ENCODE measurements at regions of chr1 and their contacts with region 1.

Region 1: GRCh38 chr1:112501810-112502641 is 6.7 kb upstream of the WNT2B start:
- DNase-seq: peak; percentile 71
- H3K4me3 ChIP-seq: peak overlapping the region; percentile 9 to 46 (median 38)
- H3K27ac ChIP-seq: no peak overlapping the region
- H3K4me1 ChIP-seq: peaks cover 6% of the 10 kb centered on the region
- H3K27me3 ChIP-seq: no peaks in the 10 kb centered on the region
- CTCF ChIP-seq: peak; percentile 69 to 90
- POLR2A ChIP-seq: no peak

Region 2: DNA sequence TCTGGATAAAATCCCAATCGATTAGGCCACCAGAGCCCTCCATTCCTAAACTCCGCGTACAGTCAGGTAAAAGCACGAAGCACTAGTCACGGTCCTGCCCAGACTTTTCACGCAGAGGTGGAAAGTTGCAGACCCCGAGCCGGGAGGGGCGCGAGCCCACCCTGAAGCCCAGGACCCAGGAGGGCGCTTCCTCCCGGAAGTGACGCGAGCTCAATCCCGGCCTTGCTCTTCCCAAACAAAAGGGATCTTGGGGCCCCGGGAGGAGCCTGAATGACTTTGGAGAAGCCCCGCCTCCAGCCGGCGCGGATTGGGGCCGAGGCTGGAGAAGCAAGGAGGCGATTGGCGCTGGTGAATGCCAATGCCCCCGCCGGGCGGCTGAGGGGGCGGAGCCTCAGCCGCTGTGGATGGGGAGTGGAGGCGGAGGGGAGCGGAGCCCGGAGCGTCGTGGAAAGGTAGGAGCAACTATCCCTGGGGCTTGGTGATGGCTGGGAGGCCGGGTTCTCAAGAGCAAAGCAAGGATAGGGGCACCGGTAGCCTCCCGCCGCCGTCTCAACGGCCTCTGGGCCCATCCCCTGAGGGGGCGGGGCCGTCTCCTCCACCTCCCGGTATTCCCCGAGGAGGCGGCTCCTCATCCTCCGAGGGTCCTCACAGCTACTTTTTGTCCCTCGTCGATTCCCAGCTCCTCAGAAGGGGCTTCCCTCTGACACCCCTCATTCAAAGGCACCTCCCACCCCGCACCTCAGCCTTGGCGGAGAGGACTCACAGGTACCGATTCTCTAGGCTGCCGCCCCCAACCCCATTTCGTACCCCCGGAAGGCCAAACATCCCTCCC is 106.0 kb before region 1 on chr1 and contains the start of gene CTTNBP2NL:
- CTCF ChIA-PET with region 1: interaction called, 34 read pairs
- POLR2A ChIA-PET with region 1: interaction called, 3 read pairs
- dilution Hi-C with region 1: no loop called
- intact Hi-C with region 1: loop called (anchors 1 kb)
- DNase-seq: peak; percentile 95
- H3K4me3 ChIP-seq: peak within 1 kb of the TSS; percentile 86 to 94 (median 91)
- H3K27ac ChIP-seq: peak within 1 kb of the TSS; percentile 97
- H3K4me1 ChIP-seq: peaks cover 64% of the 10 kb centered on the region
- H3K27me3 ChIP-seq: no peaks in the 10 kb centered on the region
- CTCF ChIP-seq: no peak
- POLR2A ChIP-seq: peak; percentile 91
- total RNA-seq, gene CTTNBP2NL: 94.4 and 96.4 TPM in 2 replicates

Region 3: DNA sequence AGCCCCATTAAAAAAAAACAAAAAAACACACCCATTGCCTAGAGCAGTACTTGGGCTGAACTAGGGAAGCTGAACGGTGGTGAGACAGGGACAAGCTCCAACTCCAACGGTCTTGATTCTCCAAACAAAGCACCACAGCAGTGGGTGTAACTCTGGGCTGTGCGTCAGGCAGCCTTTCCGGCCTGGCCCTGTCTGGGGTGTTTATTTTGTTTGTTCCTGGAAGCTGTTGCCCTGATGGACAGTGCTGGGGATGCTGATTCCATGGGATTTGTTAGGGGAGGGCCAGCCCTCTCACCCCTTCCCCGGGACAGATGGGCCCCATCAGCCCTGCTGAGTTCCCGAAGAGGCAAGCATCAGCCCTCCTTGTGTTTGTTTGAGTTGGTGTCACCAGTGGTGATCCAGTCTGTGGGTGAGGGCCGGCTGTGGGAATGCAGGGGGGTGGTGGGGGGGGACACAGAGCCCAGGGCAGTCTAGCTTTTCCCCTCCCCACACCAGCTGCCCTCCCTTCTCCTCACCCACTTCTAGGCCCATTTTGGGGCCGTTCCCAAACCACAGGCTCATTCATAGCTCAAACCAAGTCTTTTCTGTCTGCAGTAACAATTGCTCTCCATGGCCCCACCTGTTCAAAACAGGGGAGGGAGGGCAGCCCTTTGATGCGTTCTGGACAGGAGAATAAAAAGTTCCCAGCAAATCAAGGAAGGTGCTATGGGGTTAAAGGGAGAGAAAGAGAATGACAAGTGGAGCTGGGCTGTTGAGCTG is 11.3 kb after region 1 on chr1:
- CTCF ChIA-PET with region 1: interaction called, 35 read pairs
- POLR2A ChIA-PET with region 1: no interaction called
- dilution Hi-C with region 1: no loop called
- intact Hi-C with region 1: no loop called
- DNase-seq: no peak
- H3K4me3 ChIP-seq: no peak overlapping the region
- H3K27ac ChIP-seq: no peak overlapping the region
- H3K4me1 ChIP-seq: peaks cover 3% of the 10 kb centered on the region
- H3K27me3 ChIP-seq: peaks cover 8 to 9% of the 10 kb centered on the region in 2 experiments
- CTCF ChIP-seq: no peak
- POLR2A ChIP-seq: no peak

Region 4: GRCh38 chr1:112544011-112544688 is 42.1 kb after region 1 on chr1:
- CTCF ChIA-PET with region 1: interaction called, 19 read pairs
- POLR2A ChIA-PET with region 1: no interaction called
- dilution Hi-C with region 1: no loop called
- intact Hi-C with region 1: no loop called
- DNase-seq: peak; percentile 92
- H3K4me3 ChIP-seq: peak overlapping the region in 1 of 3 experiments; percentile 27
- H3K27ac ChIP-seq: peak overlapping the region; percentile 99
- H3K4me1 ChIP-seq: peaks cover 27% of the 10 kb centered on the region
- H3K27me3 ChIP-seq: no peaks in the 10 kb centered on the region
- CTCF ChIP-seq: no peak
- POLR2A ChIP-seq: peak; percentile 32

Region 5: DNA sequence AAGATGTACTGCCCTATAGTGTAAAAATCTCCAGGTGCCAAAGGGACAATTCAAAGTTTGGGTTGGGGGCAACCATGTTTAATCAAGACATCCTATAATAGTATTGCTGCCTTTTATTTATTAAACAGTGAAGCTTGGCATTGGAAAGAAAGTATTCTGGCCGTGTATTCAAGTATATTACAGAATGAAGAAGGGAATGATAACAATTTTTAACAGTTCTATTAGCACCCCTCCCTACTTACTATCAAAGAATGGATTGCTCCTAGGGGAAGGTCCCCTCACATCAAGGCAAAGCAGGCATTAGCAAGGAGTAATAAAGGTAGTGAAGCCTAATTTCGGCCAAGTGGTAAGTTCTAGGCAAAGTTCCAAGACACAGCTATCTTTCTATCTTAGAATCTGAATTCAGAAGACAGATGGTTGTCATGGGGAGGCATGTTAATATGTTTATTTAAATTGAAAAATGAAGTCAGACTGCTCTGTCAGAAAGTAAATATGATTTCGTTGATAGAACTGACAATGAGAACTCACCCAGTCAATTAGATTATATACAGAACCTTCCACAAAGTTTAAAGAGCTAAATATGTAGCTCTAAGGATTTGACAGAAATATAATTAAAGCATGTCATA is 92.3 kb after region 1 on chr1:
- CTCF ChIA-PET with region 1: interaction called, 38 read pairs
- POLR2A ChIA-PET with region 1: no interaction called
- dilution Hi-C with region 1: no loop called
- intact Hi-C with region 1: loop called (anchors 5 kb)
- DNase-seq: no peak
- H3K4me3 ChIP-seq: no peak overlapping the region
- H3K27ac ChIP-seq: no peak overlapping the region
- H3K4me1 ChIP-seq: peaks cover 20% of the 10 kb centered on the region
- H3K27me3 ChIP-seq: no peaks in the 10 kb centered on the region
- CTCF ChIP-seq: no peak
- POLR2A ChIP-seq: no peak

Region 6: GRCh38 chr1:112619520-112620376 is 117.7 kb after region 1 on chr1 and contains the start of gene CAPZA1:
- CTCF ChIA-PET with region 1: interaction called, 110 read pairs
- POLR2A ChIA-PET with region 1: interaction called, 16 read pairs
- dilution Hi-C with region 1: no loop called
- intact Hi-C with region 1: loop called (anchors 1 kb)
- DNase-seq: peak; percentile 94
- H3K4me3 ChIP-seq: peak within 1 kb of the TSS; percentile 94 to 98 (median 98)
- H3K27ac ChIP-seq: peak within 1 kb of the TSS; percentile 91
- H3K4me1 ChIP-seq: peaks cover 32% of the 10 kb centered on the region
- H3K27me3 ChIP-seq: no peaks in the 10 kb centered on the region
- CTCF ChIP-seq: no peak
- POLR2A ChIP-seq: peak; percentile 98
- total RNA-seq, gene CAPZA1: 177 and 183 TPM in 2 replicates

Region 7: DNA sequence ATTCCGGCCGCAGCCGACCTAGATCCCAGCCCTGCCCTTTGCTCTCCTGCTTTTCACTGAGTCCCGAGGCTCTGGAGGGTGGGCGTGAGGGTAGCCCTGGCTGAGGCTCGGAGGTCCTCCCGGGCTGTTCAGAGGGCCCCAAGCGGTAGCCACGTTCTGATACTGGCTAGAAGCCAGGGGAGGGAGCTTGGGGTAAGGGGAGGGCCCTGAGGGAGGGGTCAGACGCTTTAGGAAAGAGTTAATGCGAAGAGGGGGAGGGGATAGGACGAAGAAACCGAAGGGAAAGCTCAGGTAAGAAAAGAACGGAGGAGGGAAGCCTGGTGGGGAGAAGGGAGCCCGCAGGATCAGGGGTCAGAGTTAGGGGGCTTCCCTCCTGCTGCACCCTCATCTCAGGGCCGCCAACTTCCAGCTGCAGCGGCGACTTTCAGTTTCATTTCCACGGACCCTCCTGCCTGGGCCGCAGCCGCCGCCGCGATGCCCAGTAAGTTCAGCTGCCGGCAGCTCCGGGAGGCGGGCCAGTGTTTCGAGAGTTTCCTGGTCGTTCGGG is 172.5 kb after region 1 on chr1 and contains the start of gene MOV10:
- CTCF ChIA-PET with region 1: interaction called, 51 read pairs
- POLR2A ChIA-PET with region 1: no interaction called
- dilution Hi-C with region 1: no loop called
- intact Hi-C with region 1: loop called (anchors 1 kb)
- DNase-seq: peak; percentile 81
- H3K4me3 ChIP-seq: peak within 1 kb of the TSS; percentile 67 to 88 (median 82)
- H3K27ac ChIP-seq: peak within 1 kb of the TSS; percentile 69
- H3K4me1 ChIP-seq: peaks cover 21% of the 10 kb centered on the region
- H3K27me3 ChIP-seq: no peaks in the 10 kb centered on the region
- CTCF ChIP-seq: no peak
- POLR2A ChIP-seq: peak; percentile 56
- total RNA-seq, gene MOV10: 103 and 113 TPM in 2 replicates

Region 8: DNA sequence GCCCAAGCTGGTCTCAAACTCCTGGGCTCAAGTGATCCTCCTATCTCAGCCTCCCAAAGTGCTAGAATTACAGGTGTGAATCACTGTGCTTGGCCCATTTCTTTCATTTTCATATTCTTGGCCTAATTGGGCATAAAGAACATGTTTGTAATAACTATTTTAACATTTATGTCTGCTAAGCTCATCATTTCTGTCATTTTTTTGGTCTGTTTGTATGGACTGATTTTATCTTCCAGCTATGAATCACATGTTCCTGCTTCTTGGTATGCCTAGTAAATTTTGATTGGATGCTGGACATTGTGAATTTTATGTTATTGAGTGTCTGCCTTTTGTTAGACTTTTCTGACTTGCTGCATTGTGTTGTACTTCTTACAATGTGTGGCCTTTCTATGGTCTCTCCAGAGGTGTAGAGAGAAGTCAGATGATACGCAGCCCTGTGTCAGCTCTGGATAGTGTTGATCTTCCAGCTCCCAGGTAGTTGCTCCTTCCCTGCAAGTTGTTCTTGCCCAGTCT is 252.1 kb after region 1 on chr1:
- CTCF ChIA-PET with region 1: no interaction called
- POLR2A ChIA-PET with region 1: no interaction called
- dilution Hi-C with region 1: no loop called
- intact Hi-C with region 1: no loop called
- DNase-seq: no peak
- H3K4me3 ChIP-seq: no peak overlapping the region
- H3K27ac ChIP-seq: no peak overlapping the region
- H3K4me1 ChIP-seq: no peaks in the 10 kb centered on the region
- H3K27me3 ChIP-seq: peaks cover 5 to 8% of the 10 kb centered on the region in 2 experiments
- CTCF ChIP-seq: no peak
- POLR2A ChIP-seq: no peak

Measured in endothelial cell of umbilical vein (primary cell).